Breast epithelium (tissue), 4 donors: ENCODE measurements at regions of chr7 and their contacts with region 1.

Region 1: GRCh38 chr7:122689346-122690109 is 9.4 kb downstream of the RNF133 start:
- DNase-seq: no peak
- H3K4me3 ChIP-seq: no peak overlapping the region
- H3K27ac ChIP-seq: no peak overlapping the region
- H3K4me1 ChIP-seq: no peaks in the 10 kb centered on the region
- H3K27me3 ChIP-seq: no peaks in the 10 kb centered on the region
- CTCF ChIP-seq: no peak
- POLR2A ChIP-seq: no peak

Region 2: DNA sequence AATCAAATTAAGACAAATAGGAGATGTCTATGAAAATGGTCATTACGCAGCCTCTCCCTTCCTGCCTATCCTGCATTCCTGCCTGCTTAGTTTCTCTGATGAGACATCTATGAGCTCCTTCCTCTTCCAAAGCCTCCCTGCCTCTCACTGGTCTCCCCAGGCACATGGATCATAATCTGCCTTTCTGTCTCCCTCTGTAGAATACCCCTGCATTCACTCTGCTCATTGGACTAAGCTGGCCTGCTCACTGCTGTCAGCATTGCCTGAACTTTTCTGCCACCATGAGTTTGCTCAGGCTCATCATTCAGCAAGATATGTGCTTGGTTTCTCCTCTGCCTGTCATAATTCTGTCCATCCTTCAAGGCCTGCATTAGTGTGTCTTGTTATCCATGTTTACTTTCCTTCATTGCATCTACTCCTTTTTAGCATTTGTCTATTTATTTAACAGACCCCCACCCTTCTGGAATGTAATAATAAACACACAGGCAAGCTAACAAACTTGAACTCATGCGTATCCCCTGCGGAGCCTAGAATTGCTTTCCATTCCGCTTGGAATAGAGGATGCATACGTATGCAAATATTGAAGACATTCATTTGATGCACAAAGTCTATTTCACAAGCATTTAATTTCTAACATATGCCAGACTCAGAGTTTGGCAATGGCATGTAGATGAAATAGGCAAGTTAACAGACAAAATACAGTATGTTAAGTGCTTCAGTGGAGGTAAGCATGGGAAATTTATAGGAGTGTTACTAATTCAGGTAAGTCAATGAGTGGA is 728.2 kb before region 1 on chr7:
- intact Hi-C with region 1: no loop called
- DNase-seq: no peak
- H3K4me3 ChIP-seq: no peak overlapping the region
- H3K27ac ChIP-seq: no peak overlapping the region
- H3K4me1 ChIP-seq: no peaks in the 10 kb centered on the region
- H3K27me3 ChIP-seq: no peaks in the 10 kb centered on the region
- CTCF ChIP-seq: no peak
- POLR2A ChIP-seq: no peak

Region 3: GRCh38 chr7:123282186-123282585 is 592.7 kb after region 1 on chr7:
- intact Hi-C with region 1: loop called (anchors 5 kb)
- DNase-seq: no peak
- H3K4me3 ChIP-seq: no peak overlapping the region
- H3K27ac ChIP-seq: no peak overlapping the region
- H3K4me1 ChIP-seq: no peaks in the 10 kb centered on the region
- H3K27me3 ChIP-seq: no peaks in the 10 kb centered on the region
- CTCF ChIP-seq: no peak
- POLR2A ChIP-seq: no peak